Caco-2 (cell line): ENCODE measurements at regions of chr12 and their contacts with region 1.

Region 1: GRCh38 chr12:66235626-66236281 is 46.7 kb downstream of the IRAK3 start:
- DNase-seq: no peak
- H3K4me3 ChIP-seq: peak overlapping the region; percentile 45
- H3K4me3 Mint-ChIP-seq: peak overlapping the region; percentile 63
- H3K27ac Mint-ChIP-seq: no peak overlapping the region
- H3K4me1 ChIP-seq: peaks cover 15% of the 10 kb centered on the region
- H3K4me1 Mint-ChIP-seq: peaks cover 11% of the 10 kb centered on the region
- H3K27me3 ChIP-seq: no peaks in the 10 kb centered on the region
- H3K27me3 Mint-ChIP-seq: no peaks in the 10 kb centered on the region
- CTCF ChIP-seq: peak; percentile 4 to 17

Region 2: GRCh38 chr12:66144791-66145754 is 90.7 kb before region 1 on chr12:
- CTCF ChIA-PET with region 1: interaction called, 8 read pairs
- POLR2A ChIA-PET with region 1: no interaction called
- intact Hi-C with region 1: loop called (anchors 1 kb)
- DNase-seq: peak in 1 of 2 experiments; percentile 60
- H3K4me3 ChIP-seq: no peak overlapping the region
- H3K4me3 Mint-ChIP-seq: no peak overlapping the region
- H3K27ac Mint-ChIP-seq: no peak overlapping the region
- H3K4me1 ChIP-seq: 0 out of 2 replicates have a peak, but pooled peaks cover 4% of the 10 kb centered on the region
- H3K4me1 Mint-ChIP-seq: no peaks in the 10 kb centered on the region
- H3K27me3 ChIP-seq: no peaks in the 10 kb centered on the region
- H3K27me3 Mint-ChIP-seq: no peaks in the 10 kb centered on the region
- CTCF ChIP-seq: peak; percentile 60 to 61

Region 3: GRCh38 chr12:66210840-66211239 is 24.9 kb before region 1 on chr12:
- CTCF ChIA-PET with region 1: interaction called, 3 read pairs
- POLR2A ChIA-PET with region 1: no interaction called
- intact Hi-C with region 1: loop called (anchors 1 kb)
- DNase-seq: no peak
- H3K4me3 ChIP-seq: no peak overlapping the region
- H3K4me3 Mint-ChIP-seq: no peak overlapping the region
- H3K27ac Mint-ChIP-seq: no peak overlapping the region
- H3K4me1 ChIP-seq: peaks cover 18% of the 10 kb centered on the region
- H3K4me1 Mint-ChIP-seq: peaks cover 10% of the 10 kb centered on the region
- H3K27me3 ChIP-seq: no peaks in the 10 kb centered on the region
- H3K27me3 Mint-ChIP-seq: peaks cover 4% of the 10 kb centered on the region
- CTCF ChIP-seq: no peak